PC-9 (cell line): ENCODE measurements at regions of chr14 and their contacts with region 1.

Region 1: GRCh38 chr14:103141119-103141796 is 18.0 kb downstream of the TNFAIP2 start:
- DNase-seq: peak; percentile 78 to 84
- H3K4me3 ChIP-seq: no peak overlapping the region
- H3K27ac ChIP-seq: 0 out of 2 replicates have a peak overlapping the region, but pooled peaks have one; percentile 30
- H3K4me1 ChIP-seq: peaks cover 59% of the 10 kb centered on the region
- H3K27me3 ChIP-seq: no peaks in the 10 kb centered on the region
- CTCF ChIP-seq: peak; percentile 99

Region 2: GRCh38 chr14:103121846-103122584 is 19.2 kb before region 1 on chr14:
- CTCF ChIA-PET with region 1: interaction called, 3 read pairs
- POLR2A ChIA-PET with region 1: interaction called, 10 read pairs
- intact Hi-C with region 1: no loop called
- DNase-seq: peak; percentile 100
- H3K4me3 ChIP-seq: peak overlapping the region; percentile 81
- H3K27ac ChIP-seq: peak overlapping the region; percentile 86
- H3K4me1 ChIP-seq: peaks cover 55% of the 10 kb centered on the region
- H3K27me3 ChIP-seq: no peaks in the 10 kb centered on the region
- CTCF ChIP-seq: no peak

Region 3: GRCh38 chr14:103185051-103185992 is 44.1 kb after region 1 on chr14:
- CTCF ChIA-PET with region 1: no interaction called
- POLR2A ChIA-PET with region 1: interaction called, 3 read pairs
- intact Hi-C with region 1: loop called (anchors 1 kb)
- DNase-seq: peak; percentile 49 to 96
- H3K4me3 ChIP-seq: peak overlapping the region; percentile 14; the same call in 1 of the 2 replicates
- H3K27ac ChIP-seq: peak overlapping the region; percentile 92
- H3K4me1 ChIP-seq: peaks cover 37% of the 10 kb centered on the region
- H3K27me3 ChIP-seq: no peaks in the 10 kb centered on the region
- CTCF ChIP-seq: peak; percentile 100

Region 4: GRCh38 chr14:103260620-103261124 is 119.4 kb after region 1 on chr14:
- CTCF ChIA-PET with region 1: no interaction called
- POLR2A ChIA-PET with region 1: interaction called, 15 read pairs
- intact Hi-C with region 1: no loop called
- DNase-seq: peak; percentile 68 to 71
- H3K4me3 ChIP-seq: peak overlapping the region; percentile 58
- H3K27ac ChIP-seq: peak overlapping the region; percentile 80
- H3K4me1 ChIP-seq: peaks cover 47% of the 10 kb centered on the region
- H3K27me3 ChIP-seq: no peaks in the 10 kb centered on the region
- CTCF ChIP-seq: no peak